GM10248 (cell line): ENCODE measurements at regions of chr10 and their contacts with region 1.

Region 1: GRCh38 chr10:91944880-91945630 is 21.5 kb downstream of the BTAF1 start:
- DNase-seq: no peak
- CTCF ChIP-seq: no peak

Region 2: GRCh38 chr10:91768123-91768522 is 176.9 kb before region 1 on chr10:
- CTCF ChIA-PET with region 1: no interaction called
- POLR2A ChIA-PET with region 1: no interaction called
- DNase-seq: no peak
- CTCF ChIP-seq: no peak

Region 3: DNA sequence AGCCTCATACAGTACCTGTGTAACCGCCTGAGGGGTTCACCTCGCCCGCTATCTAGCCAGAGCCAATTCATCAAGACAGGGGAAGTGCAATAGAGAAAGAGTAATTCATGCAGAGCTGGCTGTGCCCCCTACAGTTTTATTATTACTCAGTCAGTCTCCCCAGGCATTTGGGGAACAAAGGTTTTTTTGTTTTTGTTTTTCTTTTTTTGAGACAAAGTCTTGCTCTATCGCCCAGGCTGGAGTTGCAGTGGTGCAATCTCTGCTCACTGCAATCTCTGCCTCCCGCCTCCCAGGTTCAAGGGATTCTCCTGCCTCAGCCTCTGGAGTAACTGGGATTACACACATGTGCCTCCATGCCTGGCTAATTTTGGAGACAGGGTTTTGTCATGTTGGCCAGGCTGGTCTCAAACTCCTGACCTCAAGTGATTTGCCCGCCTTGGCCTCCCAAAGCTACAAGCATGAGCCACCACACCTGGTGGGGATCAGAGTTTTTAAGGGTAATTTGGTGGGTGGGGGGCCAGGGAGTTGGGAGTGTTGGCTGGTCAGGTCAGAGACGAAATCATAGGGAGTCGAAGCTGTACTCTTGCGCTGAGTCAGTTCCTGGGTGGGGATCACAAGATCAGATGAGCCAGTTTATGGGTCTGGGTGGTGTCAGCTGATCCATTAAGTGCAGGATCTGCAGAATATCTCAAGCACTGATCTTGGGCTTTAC is 462.4 kb after region 1 on chr10:
- CTCF ChIA-PET with region 1: no interaction called
- POLR2A ChIA-PET with region 1: interaction called, 13 read pairs
- DNase-seq: no peak
- CTCF ChIP-seq: no peak